T-cell (primary cell): ENCODE measurements at regions of chr5 and their contacts with region 1.

Region 1: DNA sequence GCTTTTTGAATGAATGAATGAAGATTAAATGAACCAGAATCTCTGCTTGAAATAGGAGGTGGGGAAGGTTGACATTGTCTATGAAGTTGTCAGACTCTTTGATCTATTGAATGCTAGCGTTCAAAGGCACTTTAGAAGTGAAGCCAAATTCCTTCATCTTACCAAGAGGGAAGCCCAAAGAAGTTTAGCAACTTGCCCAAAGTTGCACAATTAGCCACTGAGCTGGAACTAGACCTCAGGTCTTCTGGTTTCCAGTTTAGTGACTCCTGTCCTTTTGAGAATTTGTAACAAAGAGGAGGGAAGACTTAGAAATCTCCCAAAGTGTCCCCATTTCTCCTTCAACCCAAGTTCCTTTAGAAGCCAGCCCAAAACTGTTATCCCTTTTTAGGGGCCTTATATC is 20.7 kb upstream of the SLC1A3 start:
- DNase-seq: no peak
- ATAC-seq: no peak
- H3K4me3 ChIP-seq: no peak overlapping the region
- H3K4me3 Mint-ChIP-seq: no peak overlapping the region
- H3K27ac ChIP-seq: no peak overlapping the region
- H3K27ac Mint-ChIP-seq: no peak overlapping the region
- H3K4me1 ChIP-seq: no peaks in the 10 kb centered on the region
- H3K4me1 Mint-ChIP-seq: no peaks in the 10 kb centered on the region
- H3K27me3 ChIP-seq: peaks cover 0 to 2% of the 10 kb centered on the region in 2 experiments
- H3K27me3 Mint-ChIP-seq: peaks cover 5 to 8% of the 10 kb centered on the region in 2 donors

Region 2: GRCh38 chr5:36068751-36069281 is 516.9 kb before region 1 on chr5:
- CTCF ChIA-PET with region 1: no interaction called
- POLR2A ChIA-PET with region 1: interaction called in 1 of 2 experiments, 13 read pairs
- DNase-seq: no peak
- ATAC-seq: no peak
- H3K4me3 ChIP-seq: no peak overlapping the region
- H3K4me3 Mint-ChIP-seq: no peak overlapping the region
- H3K27ac ChIP-seq: no peak overlapping the region
- H3K27ac Mint-ChIP-seq: no peak overlapping the region
- H3K4me1 ChIP-seq: peaks cover 2 to 10% of the 10 kb centered on the region in 2 experiments
- H3K4me1 Mint-ChIP-seq: peaks cover 16 to 27% (median 21%) of the 10 kb centered on the region in 3 donors
- H3K27me3 ChIP-seq: peaks cover 2 to 22% of the 10 kb centered on the region in 2 experiments
- H3K27me3 Mint-ChIP-seq: peaks cover 23 to 27% of the 10 kb centered on the region in 2 donors

Region 3: DNA sequence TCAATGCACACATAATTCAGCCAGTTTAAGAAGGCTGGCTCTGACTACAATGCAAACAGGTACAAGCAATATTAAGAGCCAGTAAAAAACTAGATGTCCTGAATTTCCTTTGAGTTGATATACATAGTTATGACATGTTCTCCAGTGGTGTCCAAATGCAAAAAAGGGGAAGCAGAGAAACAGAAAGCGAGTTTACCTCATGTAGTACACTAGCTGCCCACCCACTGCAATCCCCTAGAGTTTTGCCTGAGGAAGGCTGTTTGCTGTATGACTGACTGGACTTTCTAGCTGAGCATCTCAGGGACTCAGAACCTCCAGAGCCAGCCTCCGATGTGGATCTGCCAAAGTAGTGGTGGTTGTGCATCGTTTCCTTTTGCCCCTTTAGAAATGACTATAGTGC is 24.1 kb before region 1 on chr5:
- CTCF ChIA-PET with region 1: no interaction called
- POLR2A ChIA-PET with region 1: no interaction called
- DNase-seq: no peak
- ATAC-seq: no peak
- H3K4me3 ChIP-seq: no peak overlapping the region
- H3K4me3 Mint-ChIP-seq: no peak overlapping the region
- H3K27ac ChIP-seq: no peak overlapping the region
- H3K27ac Mint-ChIP-seq: no peak overlapping the region
- H3K4me1 ChIP-seq: no peaks in the 10 kb centered on the region
- H3K4me1 Mint-ChIP-seq: no peaks in the 10 kb centered on the region
- H3K27me3 ChIP-seq: peaks cover 0 to 4% of the 10 kb centered on the region in 2 experiments
- H3K27me3 Mint-ChIP-seq: no peaks in the 10 kb centered on the region

Region 4: GRCh38 chr5:36763454-36763853 is 177.8 kb after region 1 on chr5:
- CTCF ChIA-PET with region 1: no interaction called
- POLR2A ChIA-PET with region 1: no interaction called
- DNase-seq: no peak
- ATAC-seq: no peak
- H3K4me3 ChIP-seq: no peak overlapping the region
- H3K4me3 Mint-ChIP-seq: no peak overlapping the region
- H3K27ac ChIP-seq: no peak overlapping the region
- H3K27ac Mint-ChIP-seq: no peak overlapping the region
- H3K4me1 ChIP-seq: no peaks in the 10 kb centered on the region
- H3K4me1 Mint-ChIP-seq: no peaks in the 10 kb centered on the region
- H3K27me3 ChIP-seq: peaks cover 0 to 4% of the 10 kb centered on the region in 2 experiments
- H3K27me3 Mint-ChIP-seq: peaks cover 9 to 17% of the 10 kb centered on the region in 2 donors